PC-9 (cell line): ENCODE measurements at regions of chr9 and their contacts with region 1.

Region 1: DNA sequence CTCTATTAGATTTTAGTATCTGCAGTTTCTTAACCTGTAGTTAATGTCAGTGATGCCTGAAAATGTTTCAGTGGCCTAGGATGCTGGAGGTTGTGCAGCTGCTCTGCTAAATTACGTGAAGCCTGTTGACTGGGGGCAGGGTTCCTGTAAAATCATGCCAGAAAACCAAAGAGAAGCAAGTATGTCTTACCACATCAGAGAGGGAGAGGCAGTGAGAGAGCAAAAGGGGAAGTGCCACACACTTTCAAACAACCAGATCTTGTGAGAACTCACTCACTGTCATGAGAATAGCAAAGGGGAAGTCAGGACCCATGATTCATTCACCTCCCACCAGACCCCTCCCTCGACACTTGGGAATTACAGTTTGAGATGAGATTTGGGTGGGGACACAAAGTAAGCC is 83.9 kb upstream of the CYLC2 start:
- DNase-seq: no peak
- H3K4me3 ChIP-seq: no peak overlapping the region
- H3K27ac ChIP-seq: no peak overlapping the region
- H3K4me1 ChIP-seq: no peaks in the 10 kb centered on the region
- H3K27me3 ChIP-seq: no peaks in the 10 kb centered on the region
- CTCF ChIP-seq: no peak

Region 2: GRCh38 chr9:102867488-102867887 is 43.7 kb before region 1 on chr9:
- CTCF ChIA-PET with region 1: no interaction called
- POLR2A ChIA-PET with region 1: no interaction called
- intact Hi-C with region 1: loop called (anchors 10 kb)
- DNase-seq: peak in 1 of 2 experiments; percentile 33
- H3K4me3 ChIP-seq: no peak overlapping the region
- H3K27ac ChIP-seq: no peak overlapping the region
- H3K4me1 ChIP-seq: no peaks in the 10 kb centered on the region
- H3K27me3 ChIP-seq: no peaks in the 10 kb centered on the region
- CTCF ChIP-seq: no peak